ENCODE measurements at regions of chr9 and their contacts with region 1.

Region 1: DNA sequence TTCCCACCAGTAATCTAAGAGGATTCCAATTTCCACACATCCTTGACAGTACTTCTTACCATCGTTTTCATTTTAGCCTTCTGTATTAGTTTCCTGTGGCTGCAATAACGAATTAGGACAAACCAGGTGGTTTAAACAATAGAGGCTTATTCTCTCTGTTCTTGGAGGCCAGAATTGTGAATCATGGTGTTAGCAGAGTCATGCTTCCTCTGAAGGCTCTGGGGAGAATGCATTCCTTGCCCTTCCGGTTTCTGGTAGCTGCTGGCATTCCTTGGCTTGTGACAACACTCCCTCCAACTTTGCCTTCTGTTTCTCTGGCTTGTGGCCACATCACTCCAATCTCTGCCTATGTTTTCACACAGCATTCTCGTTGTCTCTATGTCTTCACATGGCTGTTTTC is 23.5 kb downstream of the RIGI start:
- DNase-seq: no peak
- ATAC-seq: no peak
- H3K4me3 ChIP-seq: no peak overlapping the region
- H3K27ac ChIP-seq: no peak overlapping the region
- H3K4me1 ChIP-seq: peaks cover 0 to 6% of the 10 kb centered on the region in 2 donors
- H3K27me3 ChIP-seq: no peaks in the 10 kb centered on the region
- CTCF ChIP-seq: no peak
- POLR2A ChIP-seq: no peak

Region 2: DNA sequence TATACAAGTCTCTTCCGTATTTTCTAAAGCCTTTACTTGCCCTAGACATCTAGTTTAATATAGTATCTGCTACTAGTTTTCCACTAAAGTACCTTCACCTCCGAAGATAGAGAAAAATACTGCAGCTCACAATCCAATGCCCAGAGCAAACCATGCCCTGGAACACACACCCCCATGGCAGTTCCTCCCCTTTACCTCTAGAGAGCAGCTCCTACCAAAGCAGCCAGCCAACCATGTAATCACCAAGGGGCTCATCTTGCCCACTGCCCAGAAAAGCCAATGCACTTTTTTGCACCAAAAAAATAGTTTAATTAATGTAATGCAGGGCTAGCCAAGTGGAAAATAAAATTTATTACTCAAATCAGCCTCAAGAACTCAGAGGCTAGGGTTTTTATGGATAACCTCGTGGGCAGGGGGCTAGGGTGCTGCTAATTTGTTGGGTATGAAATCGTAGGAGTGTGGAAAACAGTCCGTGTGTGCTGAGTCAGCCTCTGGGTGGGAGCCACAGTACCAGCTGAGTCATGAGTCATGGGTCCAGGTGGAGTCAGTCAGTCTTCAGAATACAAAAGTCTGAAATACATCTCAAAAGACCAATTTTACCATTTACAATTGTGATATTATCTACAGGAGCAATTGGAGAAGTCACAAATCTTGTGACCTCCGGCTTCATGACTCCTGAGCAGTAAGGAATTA is 238.1 kb before region 1 on chr9:
- in situ Hi-C with region 1: no loop called
- intact Hi-C with region 1: no loop called
- DNase-seq: no peak
- ATAC-seq: no peak
- H3K4me3 ChIP-seq: no peak overlapping the region
- H3K27ac ChIP-seq: no peak overlapping the region
- H3K4me1 ChIP-seq: no peaks in the 10 kb centered on the region
- H3K27me3 ChIP-seq: no peaks in the 10 kb centered on the region
- CTCF ChIP-seq: no peak
- POLR2A ChIP-seq: no peak

Region 3: GRCh38 chr9:32566770-32567169 is 64.3 kb after region 1 on chr9:
- in situ Hi-C with region 1: loop called in 1 of 4 experiments (anchors 10 kb)
- intact Hi-C with region 1: no loop called
- DNase-seq: no peak
- ATAC-seq: no peak
- H3K4me3 ChIP-seq: no peak overlapping the region
- H3K27ac ChIP-seq: no peak overlapping the region
- H3K4me1 ChIP-seq: peaks cover 11 to 13% of the 10 kb centered on the region in 2 donors
- H3K27me3 ChIP-seq: no peaks in the 10 kb centered on the region
- CTCF ChIP-seq: no peak
- POLR2A ChIP-seq: no peak

Measured in gastrocnemius medialis (tissue), 4 donors.